Naive thymus-derived CD4-positive, alpha-beta T cell (primary cell): ENCODE measurements at regions of chr12 and their contacts with region 1.

Region 1: DNA sequence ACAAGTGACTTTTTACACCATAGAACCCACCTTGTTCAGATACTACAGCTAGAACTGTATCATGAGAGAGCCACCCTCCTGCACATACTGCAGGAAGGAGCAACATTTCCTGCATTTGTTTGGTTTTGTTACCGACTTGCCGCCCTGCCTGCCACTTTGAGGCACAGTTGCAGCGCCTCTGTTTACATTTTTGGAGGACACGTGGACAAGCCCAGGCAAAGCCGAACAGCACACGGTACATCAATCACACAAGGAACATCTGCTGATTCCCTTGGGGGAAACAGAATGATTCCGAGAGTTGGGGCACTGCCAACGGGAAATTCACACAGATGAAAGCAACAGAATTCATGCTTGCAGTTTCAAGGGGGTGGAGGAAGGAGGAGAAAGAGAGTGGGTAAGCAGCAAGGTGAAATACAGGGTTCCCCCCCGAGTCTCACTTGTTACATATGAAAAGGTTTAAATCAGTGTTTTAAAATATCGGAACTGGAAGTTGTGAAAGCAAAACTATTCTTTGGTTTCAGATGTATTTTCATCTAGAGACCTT is 110.7 kb downstream of the BTG1 start:
- DNase-seq: peak; percentile 26 to 79 (median 71)
- ATAC-seq: peak; percentile 54
- H3K4me3 ChIP-seq: peak overlapping the region; percentile 52
- H3K4me3 Mint-ChIP-seq: peak overlapping the region; percentile 84 to 99 (median 91)
- H3K27ac ChIP-seq: peak overlapping the region; percentile 76
- H3K27ac Mint-ChIP-seq: peak overlapping the region; percentile 95 to 100 (median 99)
- H3K4me1 ChIP-seq: peaks cover 71 to 81% of the 10 kb centered on the region in 2 donors
- H3K4me1 Mint-ChIP-seq: peaks cover 49 to 100% (median 94%) of the 10 kb centered on the region in 7 donors
- H3K27me3 ChIP-seq: no peaks in the 10 kb centered on the region
- H3K27me3 Mint-ChIP-seq: no peaks in the 10 kb centered on the region

Region 2: DNA sequence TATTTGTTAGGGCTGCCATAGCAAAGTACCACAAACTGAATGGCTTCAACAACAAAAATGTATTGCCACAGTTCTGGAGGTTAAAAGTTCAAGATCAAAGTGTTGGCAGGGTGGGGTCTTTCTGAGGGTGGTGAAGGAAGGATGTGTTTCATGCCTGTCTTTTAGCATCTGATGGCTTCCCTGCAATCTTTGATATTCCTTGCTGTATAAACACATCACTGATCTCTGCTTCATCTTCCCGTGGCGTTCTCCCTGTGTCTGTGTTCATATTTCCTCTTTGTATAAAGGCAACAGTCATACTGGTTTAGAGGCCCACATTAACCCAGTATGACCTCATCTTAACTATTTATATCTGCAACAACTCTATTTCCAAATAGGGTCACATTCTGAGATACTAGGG is 56.8 kb before region 1 on chr12:
- CTCF ChIA-PET with region 1: interaction called, 3 read pairs
- POLR2A ChIA-PET with region 1: interaction called, 4 read pairs
- intact Hi-C with region 1: loop called in 1 of 2 experiments (anchors 1 kb)
- DNase-seq: peak in 7 of 9 donors; percentile 75 to 94 (median 85)
- ATAC-seq: peak; percentile 93
- H3K4me3 ChIP-seq: no peak overlapping the region
- H3K4me3 Mint-ChIP-seq: peak overlapping the region; percentile 3 to 62 (median 46)
- H3K27ac ChIP-seq: peak overlapping the region; percentile 64
- H3K27ac Mint-ChIP-seq: peak overlapping the region; percentile 58 to 96 (median 82)
- H3K4me1 ChIP-seq: peaks cover 6 to 16% of the 10 kb centered on the region in 2 donors
- H3K4me1 Mint-ChIP-seq: peaks cover 12 to 78% (median 48%) of the 10 kb centered on the region in 7 donors
- H3K27me3 ChIP-seq: no peaks in the 10 kb centered on the region
- H3K27me3 Mint-ChIP-seq: no peaks in the 10 kb centered on the region

Region 3: DNA sequence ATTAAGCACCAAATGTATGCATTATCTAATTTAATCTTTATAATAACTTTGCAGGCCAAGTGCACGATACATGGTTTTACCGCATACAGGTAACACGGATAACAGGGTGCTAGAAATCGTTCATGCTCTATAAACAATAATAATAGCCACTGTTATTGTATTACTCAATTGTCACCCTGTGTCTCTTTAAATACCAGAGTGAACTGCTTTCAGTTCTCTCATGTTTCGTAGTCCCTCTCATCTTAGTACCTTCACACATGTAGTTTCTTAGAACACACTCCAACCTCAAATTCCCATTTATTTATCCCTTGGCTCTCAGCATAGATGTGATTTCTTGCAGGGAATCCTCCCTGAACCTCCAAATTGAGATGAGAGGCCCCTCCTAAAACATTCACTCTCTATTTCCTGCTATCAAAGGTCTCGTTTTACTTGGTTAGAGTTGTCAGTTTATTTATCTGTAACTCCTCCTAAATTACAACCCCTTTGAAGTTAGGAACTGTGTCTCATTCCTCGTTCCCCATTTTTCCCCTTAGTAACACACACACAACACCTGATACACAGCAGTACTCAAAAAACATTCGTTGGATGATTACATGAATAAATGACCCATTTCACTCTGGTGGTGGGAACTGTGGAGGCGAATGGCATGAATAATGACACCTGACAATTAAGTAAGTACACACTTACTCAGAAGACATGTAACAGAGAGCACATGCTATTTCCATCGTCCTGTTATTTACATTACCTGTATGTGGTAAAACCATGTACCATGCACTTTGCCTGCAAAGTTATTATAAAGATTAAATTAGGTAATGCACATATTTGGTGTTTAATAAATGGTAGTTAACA is 23.9 kb before region 1 on chr12:
- CTCF ChIA-PET with region 1: interaction called, 3 read pairs
- POLR2A ChIA-PET with region 1: interaction called, 38 read pairs
- intact Hi-C with region 1: loop called in 1 of 2 experiments (anchors 1 kb)
- DNase-seq: peak in 4 of 9 donors; percentile 21 to 37 (median 32)
- ATAC-seq: peak; percentile 37
- H3K4me3 ChIP-seq: peak overlapping the region; percentile 22
- H3K4me3 Mint-ChIP-seq: peak overlapping the region; percentile 32 to 90 (median 84)
- H3K27ac ChIP-seq: peak overlapping the region; percentile 69
- H3K27ac Mint-ChIP-seq: peak overlapping the region; percentile 63 to 98 (median 95)
- H3K4me1 ChIP-seq: peaks cover 11 to 36% of the 10 kb centered on the region in 2 donors
- H3K4me1 Mint-ChIP-seq: peaks cover 19 to 79% (median 69%) of the 10 kb centered on the region in 7 donors
- H3K27me3 ChIP-seq: no peaks in the 10 kb centered on the region
- H3K27me3 Mint-ChIP-seq: no peaks in the 10 kb centered on the region

Region 4: DNA sequence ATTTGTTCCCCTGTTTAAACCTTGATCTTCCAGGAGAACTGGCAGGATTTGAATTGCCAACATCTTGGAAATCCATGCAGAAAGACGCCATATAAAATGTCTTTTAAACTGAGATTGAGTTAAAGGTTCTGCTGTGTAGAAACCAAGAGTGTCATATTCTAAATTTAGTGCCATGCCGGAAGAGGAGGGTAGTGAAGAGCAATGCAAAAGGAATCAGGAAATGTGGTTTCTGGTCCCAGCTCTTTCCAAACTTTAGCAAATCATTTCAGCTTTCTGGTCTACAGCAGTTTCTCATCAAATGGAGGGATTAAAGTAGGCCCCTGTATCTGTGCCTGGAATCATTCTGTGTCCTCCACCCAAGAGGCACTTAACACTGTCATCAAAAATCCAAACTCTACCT is 25.0 kb after region 1 on chr12:
- CTCF ChIA-PET with region 1: interaction called, 3 read pairs
- POLR2A ChIA-PET with region 1: interaction called, 128 read pairs
- intact Hi-C with region 1: loop called (anchors 1 kb)
- DNase-seq: no peak
- ATAC-seq: no peak
- H3K4me3 ChIP-seq: no peak overlapping the region
- H3K4me3 Mint-ChIP-seq: peak overlapping the region in 8 of 10 donors; percentile 6 to 79 (median 46)
- H3K27ac ChIP-seq: no peak overlapping the region
- H3K27ac Mint-ChIP-seq: peak overlapping the region in 8 of 9 donors; percentile 19 to 98 (median 93)
- H3K4me1 ChIP-seq: peaks cover 10 to 53% of the 10 kb centered on the region in 2 donors
- H3K4me1 Mint-ChIP-seq: peaks cover 39 to 99% (median 94%) of the 10 kb centered on the region in 7 donors
- H3K27me3 ChIP-seq: no peaks in the 10 kb centered on the region
- H3K27me3 Mint-ChIP-seq: no peaks in the 10 kb centered on the region

Region 5: DNA sequence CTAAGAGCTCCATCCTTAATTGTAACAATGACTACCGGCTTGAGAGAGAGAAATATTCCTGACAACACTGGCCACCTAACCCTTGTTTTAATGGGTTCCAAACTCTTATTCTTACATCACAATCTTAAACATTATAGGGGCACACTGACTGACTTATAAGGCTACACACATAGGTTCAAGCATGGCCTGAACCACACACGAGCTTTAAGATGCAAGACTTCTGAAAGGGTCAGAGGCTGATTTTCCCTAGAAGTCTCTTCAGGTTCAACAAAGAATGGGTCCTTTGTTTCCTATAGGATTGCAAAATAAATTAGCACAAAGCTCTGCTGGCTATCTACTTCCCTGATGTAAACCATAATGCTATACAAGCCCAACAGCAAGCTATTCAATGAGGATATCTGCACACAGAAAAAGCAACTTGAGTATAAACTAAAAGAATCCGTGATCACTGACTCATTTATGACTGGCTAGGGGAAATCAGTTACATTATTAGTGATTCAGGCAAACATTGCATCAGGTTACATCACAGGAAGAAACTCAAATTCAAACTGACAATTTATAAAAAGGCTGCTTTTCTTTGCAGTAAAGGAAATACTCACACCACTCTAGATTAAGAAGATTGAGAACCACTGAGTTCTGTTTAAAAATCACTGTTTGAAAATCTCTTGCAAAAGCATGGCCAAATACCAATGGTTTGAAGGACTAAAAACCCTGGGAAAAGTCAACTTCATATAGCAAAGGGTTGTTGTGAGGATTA is 102.2 kb after region 1 on chr12:
- CTCF ChIA-PET with region 1: interaction called, 23 read pairs
- POLR2A ChIA-PET with region 1: interaction called, 377 read pairs
- intact Hi-C with region 1: loop called in 1 of 2 experiments (anchors 1 kb)
- DNase-seq: peak in 2 of 9 donors; percentile 34 to 40
- ATAC-seq: peak; percentile 12
- H3K4me3 ChIP-seq: peak overlapping the region; percentile 98
- H3K4me3 Mint-ChIP-seq: peak overlapping the region; percentile 94 to 100 (median 98)
- H3K27ac ChIP-seq: peak overlapping the region; percentile 91
- H3K27ac Mint-ChIP-seq: peak overlapping the region; percentile 91 to 100 (median 98)
- H3K4me1 ChIP-seq: peaks cover 34 to 39% of the 10 kb centered on the region in 2 donors
- H3K4me1 Mint-ChIP-seq: peaks cover 46 to 74% (median 51%) of the 10 kb centered on the region in 7 donors
- H3K27me3 ChIP-seq: no peaks in the 10 kb centered on the region
- H3K27me3 Mint-ChIP-seq: no peaks in the 10 kb centered on the region

Region 6: GRCh38 chr12:92185052-92185451 is 150.1 kb after region 1 on chr12:
- CTCF ChIA-PET with region 1: no interaction called
- POLR2A ChIA-PET with region 1: no interaction called
- intact Hi-C with region 1: no loop called
- DNase-seq: peak in 8 of 9 donors; percentile 30 to 70 (median 56)
- ATAC-seq: peak; percentile 88
- H3K4me3 ChIP-seq: no peak overlapping the region
- H3K4me3 Mint-ChIP-seq: peak overlapping the region; percentile 28 to 77 (median 68)
- H3K27ac ChIP-seq: peak overlapping the region; percentile 74
- H3K27ac Mint-ChIP-seq: peak overlapping the region; percentile 83 to 96 (median 93)
- H3K4me1 ChIP-seq: peaks cover 22 to 29% of the 10 kb centered on the region in 2 donors
- H3K4me1 Mint-ChIP-seq: peaks cover 23 to 71% (median 60%) of the 10 kb centered on the region in 7 donors
- H3K27me3 ChIP-seq: no peaks in the 10 kb centered on the region
- H3K27me3 Mint-ChIP-seq: no peaks in the 10 kb centered on the region

Region 7: DNA sequence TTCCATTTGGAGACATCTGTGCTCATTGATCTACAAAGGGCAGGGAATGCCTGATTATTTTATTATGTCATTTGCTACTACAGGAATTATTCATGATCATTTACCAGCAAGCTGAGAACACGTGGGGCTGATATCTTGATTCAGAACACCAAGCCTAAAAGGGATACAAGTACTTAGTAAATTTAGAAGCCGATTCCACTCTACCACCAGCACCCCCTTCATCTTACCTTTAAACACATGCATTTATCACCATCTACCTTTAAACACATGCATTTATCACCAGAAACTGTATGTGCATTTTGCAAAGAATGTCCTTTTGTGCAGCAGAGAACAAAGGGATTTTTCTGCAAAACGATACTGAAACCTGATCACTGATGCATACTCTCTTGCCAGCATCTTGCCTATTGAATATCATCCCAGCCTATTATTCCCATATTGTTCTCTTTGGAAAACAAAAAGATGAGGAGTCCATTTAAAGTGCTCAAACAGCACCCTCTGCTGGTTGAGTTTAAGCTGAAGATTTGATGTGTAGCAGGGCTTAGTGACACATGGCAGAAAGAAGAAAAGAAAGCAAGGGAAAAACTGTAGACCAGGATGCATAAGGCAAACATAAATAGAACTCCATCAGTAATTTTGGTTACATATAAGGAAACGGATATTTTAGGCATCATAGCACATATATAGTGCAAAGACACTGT is 535.3 kb after region 1 on chr12:
- CTCF ChIA-PET with region 1: interaction called, 4 read pairs
- POLR2A ChIA-PET with region 1: no interaction called
- intact Hi-C with region 1: loop called in 1 of 2 experiments (anchors 1 kb)
- DNase-seq: peak in 7 of 9 donors; percentile 67 to 86 (median 80)
- ATAC-seq: peak; percentile 92
- H3K4me3 ChIP-seq: no peak overlapping the region
- H3K4me3 Mint-ChIP-seq: no peak overlapping the region
- H3K27ac ChIP-seq: peak overlapping the region; percentile 52
- H3K27ac Mint-ChIP-seq: no peak overlapping the region
- H3K4me1 ChIP-seq: peaks cover 11 to 13% of the 10 kb centered on the region in 2 donors
- H3K4me1 Mint-ChIP-seq: peaks cover 0 to 37% (median 6%) of the 10 kb centered on the region in 7 donors
- H3K27me3 ChIP-seq: no peaks in the 10 kb centered on the region
- H3K27me3 Mint-ChIP-seq: no peaks in the 10 kb centered on the region